PC-3 (cell line): ENCODE measurements at regions of chr16 and their contacts with region 1.

Region 1: GRCh38 chr16:66894948-66895688 is 14.8 kb downstream of the PDP2 start:
- DNase-seq: peak; percentile 70
- ATAC-seq: peak; percentile 89
- H3K4me3 ChIP-seq: no peak overlapping the region
- H3K27ac ChIP-seq: no peak overlapping the region
- H3K4me1 ChIP-seq: peaks cover 3% of the 10 kb centered on the region; the same call in 1 of the 2 replicates
- H3K27me3 ChIP-seq: no peaks in the 10 kb centered on the region
- CTCF ChIP-seq: peak; percentile 81

Region 2: DNA sequence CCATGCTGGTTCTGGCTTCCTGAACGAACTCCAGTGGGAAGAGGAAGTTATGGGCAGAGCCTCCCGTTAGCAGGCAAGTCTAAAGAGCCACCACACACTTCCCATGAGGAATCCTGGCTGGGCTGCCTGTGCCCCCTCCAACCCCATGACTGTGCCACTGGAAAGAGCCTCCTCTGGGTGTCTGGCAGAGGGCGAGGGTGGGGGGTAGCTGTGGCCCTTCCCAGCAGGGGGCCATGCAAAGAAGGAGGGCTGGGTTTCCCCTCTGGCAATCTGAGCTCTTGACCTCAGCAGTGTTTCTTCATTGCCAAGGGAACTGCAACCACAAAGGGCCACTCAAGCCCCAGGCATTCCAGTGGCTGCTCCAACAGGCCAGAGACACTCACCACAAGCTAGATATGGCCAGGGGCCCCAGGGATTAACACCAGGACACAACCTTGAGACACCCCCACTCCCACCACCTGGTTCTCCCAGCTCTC is 31.9 kb after region 1 on chr16:
- CTCF ChIA-PET with region 1: no interaction called
- POLR2A ChIA-PET with region 1: no interaction called
- intact Hi-C with region 1: loop called (anchors 1 kb)
- DNase-seq: peak; percentile 39
- ATAC-seq: peak; percentile 10; the same call in 1 of the 2 replicates
- H3K4me3 ChIP-seq: no peak overlapping the region
- H3K27ac ChIP-seq: no peak overlapping the region
- H3K4me1 ChIP-seq: peaks cover 11% of the 10 kb centered on the region; the same call in 1 of the 2 replicates
- H3K27me3 ChIP-seq: peaks cover 13% of the 10 kb centered on the region
- CTCF ChIP-seq: no peak